SK-N-SH (cell line): ENCODE measurements at regions of chr1 and their contacts with region 1.

Region 1: DNA sequence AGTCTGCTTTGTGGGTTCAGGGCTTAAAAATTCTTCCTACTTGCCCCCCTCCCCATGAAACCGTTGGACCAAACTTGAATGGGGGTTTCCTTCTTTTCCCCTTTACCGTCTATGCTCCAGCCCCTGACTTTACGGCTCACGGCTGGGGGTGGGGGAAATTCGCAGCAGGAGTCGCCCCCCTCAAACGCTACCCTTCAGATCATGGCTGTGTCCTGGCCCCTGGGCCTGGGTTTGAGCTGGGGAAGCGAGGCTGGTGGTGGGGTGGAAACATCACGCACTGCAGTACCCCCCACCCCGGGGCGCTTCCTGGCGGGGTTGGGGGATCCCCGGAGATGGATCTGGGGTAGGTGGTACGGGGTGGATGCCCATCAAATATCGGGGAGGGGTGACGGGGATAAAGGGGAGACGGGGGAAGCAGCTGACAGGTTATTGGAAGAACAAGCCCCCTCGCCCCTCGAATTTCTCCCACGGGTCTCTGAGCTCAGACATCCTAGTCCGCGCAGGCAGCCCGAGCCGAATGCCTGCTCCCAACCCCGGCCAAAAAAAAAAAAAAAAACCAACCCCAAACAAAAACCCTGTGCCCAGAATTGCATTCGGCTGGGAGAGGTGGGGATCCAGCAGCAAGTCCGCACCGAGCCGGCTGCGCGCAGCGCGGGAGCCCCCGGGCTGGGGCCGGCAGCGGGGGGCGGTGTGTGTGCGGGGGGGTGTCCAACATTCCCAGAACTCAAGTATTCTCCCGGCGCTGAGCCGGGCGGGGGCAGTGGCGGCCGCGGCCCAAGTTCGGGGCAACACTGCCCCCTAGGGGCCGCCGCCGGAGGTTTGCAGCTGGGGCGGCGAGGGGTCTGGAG is 59.0 kb upstream of the ACOT11 start:
- DNase-seq: peak; percentile 95
- H3K4me3 ChIP-seq: peak overlapping the region; percentile 54 to 86
- H3K27ac ChIP-seq: peak overlapping the region; percentile 96 to 97
- H3K4me1 ChIP-seq: peaks cover 11 to 31% of the 10 kb centered on the region in 2 experiments; a peak in 3 of 4 replicates
- H3K27me3 ChIP-seq: no peaks in the 10 kb centered on the region
- CTCF ChIP-seq: peak; percentile 90
- EP300 ChIP-seq: no peak
- RAD21 ChIP-seq: peak; percentile 84

Region 2: DNA sequence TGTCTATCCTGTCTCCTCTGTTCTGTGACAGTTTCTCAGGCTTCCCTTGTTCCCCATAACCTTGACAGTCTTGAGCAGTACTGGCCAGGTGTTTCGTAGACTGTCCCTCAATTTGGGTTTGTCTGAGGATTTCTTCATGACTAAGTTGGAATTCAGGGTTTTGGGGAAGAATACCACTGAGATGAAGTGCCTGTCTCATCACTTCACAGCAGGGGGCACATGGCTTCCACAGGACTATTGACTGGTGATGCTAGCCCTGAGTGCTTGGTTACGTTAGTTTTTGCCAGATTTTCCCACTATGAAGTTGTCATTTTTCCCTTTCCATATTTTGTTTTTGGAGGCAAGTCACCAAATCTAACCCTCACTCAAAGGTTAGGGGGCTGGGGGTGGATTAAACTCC is 381.9 kb before region 1 on chr1:
- CTCF ChIA-PET with region 1: interaction called, 14 read pairs
- POLR2A ChIA-PET with region 1: no interaction called
- DNase-seq: no peak
- H3K4me3 ChIP-seq: no peak overlapping the region
- H3K27ac ChIP-seq: no peak overlapping the region
- H3K4me1 ChIP-seq: peaks cover 0 to 5% of the 10 kb centered on the region in 2 experiments; a peak in 1 of 4 replicates
- H3K27me3 ChIP-seq: no peaks in the 10 kb centered on the region
- CTCF ChIP-seq: peak; percentile 58
- EP300 ChIP-seq: no peak
- RAD21 ChIP-seq: peak; percentile 62

Region 3: DNA sequence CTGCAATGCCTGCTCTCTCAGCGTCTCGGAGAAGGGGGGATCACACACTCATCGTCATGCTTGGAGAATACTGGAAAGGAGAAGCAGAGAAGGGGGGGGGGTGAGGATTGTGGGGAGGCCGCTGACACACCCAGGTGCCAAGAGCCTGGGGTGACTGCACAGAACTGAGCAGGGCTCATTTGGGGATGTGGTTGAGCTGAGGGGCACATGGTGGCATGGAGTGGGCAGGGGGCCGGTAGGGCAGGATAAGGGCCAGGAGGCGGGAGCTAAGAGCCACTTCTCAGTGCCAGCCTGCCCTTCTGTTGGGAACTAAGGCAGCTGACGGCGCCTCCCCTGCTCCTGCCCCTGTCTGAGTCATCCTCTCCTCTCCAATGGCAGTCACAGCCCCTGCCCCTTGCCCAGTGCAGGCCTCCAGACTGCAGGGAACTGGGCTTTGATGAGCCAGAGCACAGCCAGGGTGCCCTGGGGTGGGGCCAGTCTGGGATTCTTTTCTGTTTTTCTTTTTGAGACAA is 261.9 kb before region 1 on chr1:
- CTCF ChIA-PET with region 1: interaction called, 12 read pairs
- POLR2A ChIA-PET with region 1: no interaction called
- DNase-seq: peak; percentile 76
- H3K4me3 ChIP-seq: no peak overlapping the region
- H3K27ac ChIP-seq: peak overlapping the region; percentile 36 to 95
- H3K4me1 ChIP-seq: peaks cover 18 to 88% of the 10 kb centered on the region in 2 experiments
- H3K27me3 ChIP-seq: no peaks in the 10 kb centered on the region
- CTCF ChIP-seq: no peak
- EP300 ChIP-seq: no peak
- RAD21 ChIP-seq: no peak

Region 4: GRCh38 chr1:54310439-54311328 is 178.3 kb before region 1 on chr1:
- CTCF ChIA-PET with region 1: interaction called, 12 read pairs
- POLR2A ChIA-PET with region 1: no interaction called
- DNase-seq: peak; percentile 65
- H3K4me3 ChIP-seq: no peak overlapping the region
- H3K27ac ChIP-seq: peak overlapping the region in 1 of 2 experiments; percentile 29; a peak in 1 of 4 replicates
- H3K4me1 ChIP-seq: peaks cover 8 to 75% of the 10 kb centered on the region in 2 experiments; a peak in 3 of 4 replicates
- H3K27me3 ChIP-seq: no peaks in the 10 kb centered on the region
- CTCF ChIP-seq: peak; percentile 58
- EP300 ChIP-seq: no peak
- RAD21 ChIP-seq: peak; percentile 70

Region 5: DNA sequence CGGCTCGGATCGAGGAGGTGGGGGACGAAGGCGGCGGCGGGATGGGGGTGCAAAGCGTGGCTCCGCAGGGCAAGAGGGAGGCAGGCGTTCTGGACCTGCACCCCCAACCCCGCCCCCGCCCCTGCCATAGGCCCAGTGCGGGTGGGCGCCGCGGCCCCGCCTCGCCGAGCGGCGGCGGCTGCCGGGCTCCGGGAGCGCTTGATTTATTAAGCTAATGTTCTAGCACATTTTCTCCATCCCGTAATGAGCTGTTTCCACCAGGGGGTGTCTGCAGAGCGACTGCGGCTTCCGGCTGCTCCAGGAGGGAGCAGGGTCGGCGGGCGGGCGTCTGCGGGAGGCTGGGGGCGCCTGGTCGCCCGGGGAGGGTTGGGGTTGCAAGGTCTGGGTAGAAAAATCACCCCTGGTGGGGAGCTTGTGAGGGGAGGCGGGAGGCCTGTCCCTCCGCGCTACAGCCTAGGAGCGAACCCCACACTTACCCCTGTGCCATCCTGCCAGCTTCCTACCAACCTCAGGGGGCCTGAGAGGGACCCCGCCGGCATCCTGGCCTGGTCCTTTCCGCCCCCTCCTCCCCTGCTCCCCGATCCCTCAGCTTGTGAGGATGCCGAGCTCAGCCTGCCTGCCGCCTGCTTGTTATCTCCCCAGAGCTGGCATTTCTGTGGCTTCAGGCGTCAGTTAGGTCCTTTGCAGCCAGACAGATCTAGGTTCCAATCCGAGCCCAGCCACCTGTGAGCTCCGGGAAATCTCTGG is 10.5 kb after region 1 on chr1:
- CTCF ChIA-PET with region 1: interaction called, 28 read pairs
- POLR2A ChIA-PET with region 1: interaction called, 3 read pairs
- DNase-seq: peak; percentile 84
- H3K4me3 ChIP-seq: peak overlapping the region; percentile 37 to 42; a peak in 3 of 4 replicates
- H3K27ac ChIP-seq: peak overlapping the region in 1 of 2 experiments; percentile 17; a peak in 1 of 4 replicates
- H3K4me1 ChIP-seq: peaks cover 0 to 20% of the 10 kb centered on the region in 2 experiments; a peak in 1 of 4 replicates
- H3K27me3 ChIP-seq: no peaks in the 10 kb centered on the region
- CTCF ChIP-seq: peak; percentile 44
- EP300 ChIP-seq: no peak
- RAD21 ChIP-seq: peak; percentile 48

Region 6: DNA sequence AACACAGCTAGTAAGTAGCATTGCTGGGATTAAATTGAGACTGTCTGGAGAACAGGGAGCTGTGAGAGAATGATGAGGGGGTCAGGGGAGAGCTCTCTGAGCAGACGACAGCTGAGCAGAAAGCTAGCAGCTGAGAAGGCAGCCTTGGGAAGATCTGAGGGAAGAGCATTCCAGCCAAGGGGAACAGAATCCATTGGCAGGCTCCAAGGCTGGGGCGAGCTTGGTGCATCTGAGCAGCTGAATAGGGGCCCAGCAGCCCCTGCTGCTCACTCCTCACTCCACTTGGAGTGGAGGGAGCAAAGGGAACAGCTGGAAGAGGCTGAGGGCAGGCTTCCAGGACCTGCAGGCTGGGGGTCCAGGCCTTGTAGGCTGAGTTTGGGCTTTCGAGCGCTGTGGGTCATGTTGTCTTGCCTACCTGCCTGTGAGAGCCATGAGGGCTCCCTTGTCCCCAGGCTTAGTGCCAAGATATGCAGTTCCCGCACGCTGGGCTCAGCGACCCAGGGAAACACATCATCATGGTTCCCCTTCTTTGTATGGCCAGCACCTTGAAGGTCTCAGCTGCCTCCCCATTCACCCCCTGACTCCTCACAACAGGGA is 69.5 kb after region 1 on chr1:
- CTCF ChIA-PET with region 1: interaction called, 11 read pairs
- POLR2A ChIA-PET with region 1: no interaction called
- DNase-seq: no peak
- H3K4me3 ChIP-seq: no peak overlapping the region
- H3K27ac ChIP-seq: peak overlapping the region in 1 of 2 experiments; percentile 3; a peak in 2 of 4 replicates
- H3K4me1 ChIP-seq: peaks cover 5 to 21% of the 10 kb centered on the region in 2 experiments; a peak in 2 of 4 replicates
- H3K27me3 ChIP-seq: no peaks in the 10 kb centered on the region
- CTCF ChIP-seq: no peak
- EP300 ChIP-seq: no peak
- RAD21 ChIP-seq: no peak